ENCODE measurements at regions of chr10 and their contacts with region 1.

Region 1: DNA sequence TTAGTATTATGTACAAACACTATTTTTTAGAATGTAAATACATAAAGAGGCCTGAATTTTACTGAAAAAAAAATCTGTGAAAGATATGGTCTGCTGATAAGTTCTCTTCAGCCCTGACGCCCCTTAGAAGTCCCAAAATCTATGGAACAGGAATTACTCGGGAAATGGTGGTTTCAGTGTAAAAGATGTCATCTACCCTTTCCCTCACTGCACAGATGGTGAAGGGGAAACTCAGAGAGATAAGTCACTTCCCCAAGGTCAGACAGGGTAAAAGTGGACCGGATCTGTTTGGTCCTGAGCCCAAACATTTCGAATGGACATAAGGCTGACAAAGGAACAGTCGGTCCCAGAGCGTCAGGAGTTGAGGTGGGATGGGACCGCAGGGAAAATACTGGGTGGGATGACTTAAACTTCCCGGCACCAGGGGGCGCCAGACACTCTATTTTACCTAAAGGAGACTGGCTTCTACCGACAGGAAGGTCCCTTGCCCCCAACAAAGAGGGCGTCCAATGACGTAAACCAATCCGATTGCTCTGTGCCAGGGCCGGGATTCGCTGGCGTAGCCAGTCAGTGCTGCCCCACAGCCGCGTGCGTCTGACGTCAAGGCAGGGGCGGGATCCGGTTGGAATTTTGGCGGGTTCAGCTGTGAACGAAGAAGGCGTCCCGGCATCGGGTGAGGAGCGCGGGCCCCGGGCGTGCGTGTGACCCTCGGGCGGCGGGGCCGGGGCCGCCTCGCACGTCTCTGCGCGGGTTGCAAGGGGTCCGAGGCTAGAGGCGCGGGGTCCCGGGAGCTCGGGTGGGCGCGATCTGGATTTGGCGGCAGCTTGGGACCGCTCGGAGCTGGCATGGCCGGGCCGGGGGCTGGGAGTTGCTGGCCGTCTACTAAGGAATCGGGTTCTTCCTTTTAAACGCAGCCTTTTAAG is at the start of gene MCM10:
- DNase-seq: peak; percentile 95 to 99 (median 96)
- ATAC-seq: peak; percentile 99
- H3K4me3 ChIP-seq: peak within 1 kb of the TSS; percentile 58
- H3K27ac ChIP-seq: peak within 1 kb of the TSS; percentile 66
- H3K4me1 ChIP-seq: peaks cover 4 to 13% of the 10 kb centered on the region in 2 experiments; a peak in 4 of 5 replicates
- H3K27me3 ChIP-seq: no peaks in the 10 kb centered on the region
- CTCF ChIP-seq: peak; percentile 73 to 95 (median 92)
- EP300 ChIP-seq: no peak
- POLR2A ChIP-seq: peak; percentile 79
- RAD21 ChIP-seq: peak; percentile 71 to 73
- polyA plus RNA-seq, gene MCM10: 10.4 to 26.1 TPM

Region 2: GRCh38 chr10:13115832-13116803 is 45.1 kb before region 1 on chr10:
- CTCF ChIA-PET with region 1: no interaction called
- POLR2A ChIA-PET with region 1: no interaction called
- in situ Hi-C with region 1: no loop called
- intact Hi-C with region 1: loop called (anchors 5 kb)
- DNase-seq: peak in 1 of 4 experiments; percentile 41
- ATAC-seq: peak; percentile 66
- H3K4me3 ChIP-seq: no peak overlapping the region
- H3K27ac ChIP-seq: peak overlapping the region; percentile 56; the same call in 2 of the 3 replicates
- H3K4me1 ChIP-seq: peaks cover 0 to 25% of the 10 kb centered on the region in 2 experiments; a peak in 3 of 5 replicates
- H3K27me3 ChIP-seq: no peaks in the 10 kb centered on the region
- CTCF ChIP-seq: no peak
- EP300 ChIP-seq: peak; percentile 29; the same call in 1 of the 2 replicates
- POLR2A ChIP-seq: no peak
- RAD21 ChIP-seq: no peak

Region 3: GRCh38 chr10:13183625-13184024 is 22.4 kb after region 1 on chr10:
- CTCF ChIA-PET with region 1: no interaction called
- POLR2A ChIA-PET with region 1: no interaction called
- in situ Hi-C with region 1: no loop called
- intact Hi-C with region 1: no loop called
- DNase-seq: no peak
- ATAC-seq: no peak
- H3K4me3 ChIP-seq: no peak overlapping the region
- H3K27ac ChIP-seq: no peak overlapping the region
- H3K4me1 ChIP-seq: no peaks in the 10 kb centered on the region
- H3K27me3 ChIP-seq: no peaks in the 10 kb centered on the region
- CTCF ChIP-seq: no peak
- EP300 ChIP-seq: no peak
- POLR2A ChIP-seq: no peak
- RAD21 ChIP-seq: no peak

Region 4: GRCh38 chr10:13271552-13272163 is 110.5 kb after region 1 on chr10:
- CTCF ChIA-PET with region 1: no interaction called
- POLR2A ChIA-PET with region 1: no interaction called
- in situ Hi-C with region 1: no loop called
- intact Hi-C with region 1: loop called (anchors 10 kb)
- DNase-seq: peak; percentile 78 to 89 (median 84)
- ATAC-seq: peak; percentile 98
- H3K4me3 ChIP-seq: no peak overlapping the region
- H3K27ac ChIP-seq: peak overlapping the region; percentile 62
- H3K4me1 ChIP-seq: peaks cover 21 to 24% of the 10 kb centered on the region in 2 experiments; a peak in 4 of 5 replicates
- H3K27me3 ChIP-seq: no peaks in the 10 kb centered on the region
- CTCF ChIP-seq: peak; percentile 77 to 91 (median 78)
- EP300 ChIP-seq: no peak
- POLR2A ChIP-seq: no peak
- RAD21 ChIP-seq: peak; percentile 43 to 78

Region 5: DNA sequence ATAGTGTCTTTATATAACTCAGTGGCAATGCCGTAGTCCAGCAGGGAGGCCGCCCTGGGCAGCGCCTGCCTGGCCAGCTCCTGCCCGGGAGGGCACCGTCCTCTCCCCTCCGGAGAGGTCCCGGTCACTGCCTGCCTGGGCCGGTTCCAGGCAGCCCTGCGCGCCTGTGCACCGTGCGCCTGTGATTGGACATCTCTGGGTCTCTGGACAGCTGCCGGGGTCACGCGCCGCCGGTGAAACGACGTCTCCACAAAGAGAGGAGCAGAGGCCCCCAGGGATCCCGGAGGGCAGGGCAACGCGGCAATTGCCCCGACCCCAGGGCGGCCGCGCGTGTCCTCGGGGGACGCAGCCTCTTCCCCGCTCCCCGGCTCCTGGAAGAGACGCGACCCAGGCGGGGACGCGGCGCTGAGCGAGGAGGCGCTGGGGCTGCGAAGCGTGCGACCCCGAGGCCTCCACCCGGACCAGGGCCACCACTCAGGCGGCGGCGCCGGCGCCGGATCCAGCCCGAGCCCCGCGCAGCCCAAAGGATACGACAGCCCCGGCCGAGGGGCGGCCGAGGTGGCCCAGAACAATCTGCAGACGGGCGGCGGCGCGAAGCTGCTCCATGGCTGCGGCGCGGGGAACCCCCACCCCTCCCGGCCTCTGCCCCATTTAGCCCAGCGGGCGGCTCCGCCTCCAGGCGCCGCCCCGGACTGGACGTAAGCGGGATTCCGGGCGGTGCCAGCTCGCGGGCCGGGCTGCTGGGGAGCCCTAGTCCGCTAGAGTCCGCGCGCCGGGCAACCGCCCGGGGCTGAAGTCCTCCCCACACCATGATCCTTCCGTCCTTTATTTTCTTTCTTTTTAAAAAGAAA is 138.5 kb after region 1 on chr10 and contains the start of gene PHYH:
- CTCF ChIA-PET with region 1: interaction called, 6 read pairs
- POLR2A ChIA-PET with region 1: interaction called, 3 read pairs
- in situ Hi-C with region 1: no loop called
- intact Hi-C with region 1: loop called (anchors 2 kb)
- DNase-seq: peak; percentile 83 to 90 (median 88)
- ATAC-seq: peak; percentile 89
- H3K4me3 ChIP-seq: peak within 1 kb of the TSS; percentile 58
- H3K27ac ChIP-seq: peak within 1 kb of the TSS; percentile 69
- H3K4me1 ChIP-seq: peaks cover 8 to 32% of the 10 kb centered on the region in 2 experiments; a peak in 3 of 5 replicates
- H3K27me3 ChIP-seq: no peaks in the 10 kb centered on the region
- CTCF ChIP-seq: no peak
- EP300 ChIP-seq: no peak; the same call in 1 of the 2 replicates
- POLR2A ChIP-seq: peak; percentile 69
- RAD21 ChIP-seq: no peak
- polyA plus RNA-seq, gene PHYH: 6.3 to 6.9 TPM

Region 6: GRCh38 chr10:13349463-13350274 is 188.5 kb after region 1 on chr10:
- CTCF ChIA-PET with region 1: no interaction called
- POLR2A ChIA-PET with region 1: no interaction called
- in situ Hi-C with region 1: no loop called
- intact Hi-C with region 1: loop called (anchors 5 kb)
- DNase-seq: peak; percentile 27 to 41 (median 32)
- ATAC-seq: peak; percentile 7; the same call in 2 of the 3 replicates
- H3K4me3 ChIP-seq: no peak overlapping the region
- H3K27ac ChIP-seq: no peak overlapping the region
- H3K4me1 ChIP-seq: peaks cover 13 to 17% of the 10 kb centered on the region in 2 experiments
- H3K27me3 ChIP-seq: peaks cover 0 to 6% of the 10 kb centered on the region in 2 experiments; a peak in 3 of 5 replicates
- CTCF ChIP-seq: no peak
- EP300 ChIP-seq: no peak
- POLR2A ChIP-seq: no peak
- RAD21 ChIP-seq: no peak

Region 7: GRCh38 chr10:13440185-13441061 is 279.2 kb after region 1 on chr10:
- CTCF ChIA-PET with region 1: no interaction called
- POLR2A ChIA-PET with region 1: no interaction called
- in situ Hi-C with region 1: no loop called
- intact Hi-C with region 1: loop called (anchors 5 kb)
- DNase-seq: peak; percentile 77 to 85 (median 84)
- ATAC-seq: peak; percentile 97
- H3K4me3 ChIP-seq: 0 out of 2 replicates have a peak overlapping the region, but pooled peaks have one; percentile 23
- H3K27ac ChIP-seq: no peak overlapping the region
- H3K4me1 ChIP-seq: peaks cover 13 to 19% of the 10 kb centered on the region in 2 experiments; a peak in 4 of 5 replicates
- H3K27me3 ChIP-seq: no peaks in the 10 kb centered on the region
- CTCF ChIP-seq: peak; percentile 89 to 94 (median 93)
- EP300 ChIP-seq: no peak
- POLR2A ChIP-seq: no peak
- RAD21 ChIP-seq: peak; percentile 84 to 87

Region 8: GRCh38 chr10:13485623-13486022 is 324.4 kb after region 1 on chr10:
- CTCF ChIA-PET with region 1: no interaction called
- POLR2A ChIA-PET with region 1: no interaction called
- in situ Hi-C with region 1: no loop called
- intact Hi-C with region 1: no loop called
- DNase-seq: peak in 2 of 4 experiments; percentile 17
- ATAC-seq: peak; percentile 39; the same call in 1 of the 3 replicates
- H3K4me3 ChIP-seq: no peak overlapping the region
- H3K27ac ChIP-seq: no peak overlapping the region
- H3K4me1 ChIP-seq: no peaks in the 10 kb centered on the region
- H3K27me3 ChIP-seq: peaks cover 0 to 5% of the 10 kb centered on the region in 2 experiments; a peak in 1 of 5 replicates
- CTCF ChIP-seq: peak in 2 of 3 experiments; percentile 35 to 49; a peak in 3 of 6 replicates
- EP300 ChIP-seq: no peak
- POLR2A ChIP-seq: no peak
- RAD21 ChIP-seq: no peak